ENCODE measurements at regions of chr15 and their contacts with region 1.

Region 1: GRCh38 chr15:41401904-41402267 is 410 bp downstream of the NDUFAF1 start:
- DNase-seq: no peak
- H3K4me3 Mint-ChIP-seq: peak overlapping the region; percentile 92
- H3K27ac Mint-ChIP-seq: peak overlapping the region; percentile 96
- H3K4me1 Mint-ChIP-seq: peaks cover 10% of the 10 kb centered on the region
- H3K27me3 Mint-ChIP-seq: no peaks in the 10 kb centered on the region
- CTCF ChIP-seq: no peak

Region 2: DNA sequence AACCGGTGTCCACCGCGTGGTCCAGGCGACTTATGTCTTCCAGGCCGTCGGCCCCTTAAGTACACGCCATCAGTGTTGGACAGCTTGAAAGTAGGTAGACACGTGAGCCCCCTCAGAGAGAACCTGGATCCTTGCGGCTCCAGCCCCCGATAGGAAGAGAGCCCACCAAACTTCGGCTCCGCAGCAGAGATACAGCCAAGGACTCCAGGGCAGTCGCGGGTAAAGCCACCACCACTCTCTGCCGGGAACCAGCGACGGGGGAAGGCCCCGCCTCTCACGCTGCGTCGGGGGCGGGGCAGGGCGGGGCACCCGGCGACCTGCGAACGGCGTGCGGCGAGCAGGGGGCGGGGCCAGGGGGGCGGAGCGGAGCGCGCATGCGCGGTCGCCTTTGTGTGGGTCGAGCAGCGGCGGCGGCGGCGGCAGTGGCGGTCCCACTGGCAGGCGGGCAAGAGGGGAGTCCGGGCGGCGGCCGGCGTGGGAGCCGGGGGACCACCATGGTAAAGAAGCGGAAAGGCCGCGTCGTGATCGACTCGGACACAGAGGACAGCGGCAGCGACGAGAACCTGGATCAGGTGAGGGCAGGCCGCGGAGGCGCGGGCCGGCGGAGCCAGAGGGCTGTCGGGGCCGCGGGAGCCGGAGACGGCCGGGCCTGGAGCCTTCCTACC is 15.0 kb after region 1 on chr15 and contains the start of gene RTF1:
- CTCF ChIA-PET with region 1: no interaction called
- POLR2A ChIA-PET with region 1: interaction called, 15 read pairs
- intact Hi-C with region 1: no loop called
- DNase-seq: peak; percentile 90
- H3K4me3 Mint-ChIP-seq: peak within 1 kb of the TSS; percentile 92
- H3K27ac Mint-ChIP-seq: peak within 1 kb of the TSS; percentile 85
- H3K4me1 Mint-ChIP-seq: peaks cover 18% of the 10 kb centered on the region
- H3K27me3 Mint-ChIP-seq: no peaks in the 10 kb centered on the region
- CTCF ChIP-seq: no peak
- total RNA-seq, gene RTF1: 30.2 and 30.6 TPM in 2 replicates